Right ventricle myocardium inferior (tissue), 1 donor: ENCODE measurements at regions of chr5 and their contacts with region 1.

Region 1: GRCh38 chr5:41457094-41457493 is 53.3 kb downstream of the PLCXD3 start:
- DNase-seq: no peak
- ATAC-seq: peak; percentile 90

Region 2: GRCh38 chr5:41406424-41406823 is 50.7 kb before region 1 on chr5:
- intact Hi-C with region 1: loop called (anchors 2 kb)
- DNase-seq: no peak
- ATAC-seq: no peak

Region 3: GRCh38 chr5:41509399-41510175 is 52.5 kb after region 1 on chr5:
- intact Hi-C with region 1: loop called (anchors 2 kb)
- DNase-seq: no peak
- ATAC-seq: peak; percentile 23